ENCODE measurements at regions of chr14 and their contacts with region 1.

Region 1: DNA sequence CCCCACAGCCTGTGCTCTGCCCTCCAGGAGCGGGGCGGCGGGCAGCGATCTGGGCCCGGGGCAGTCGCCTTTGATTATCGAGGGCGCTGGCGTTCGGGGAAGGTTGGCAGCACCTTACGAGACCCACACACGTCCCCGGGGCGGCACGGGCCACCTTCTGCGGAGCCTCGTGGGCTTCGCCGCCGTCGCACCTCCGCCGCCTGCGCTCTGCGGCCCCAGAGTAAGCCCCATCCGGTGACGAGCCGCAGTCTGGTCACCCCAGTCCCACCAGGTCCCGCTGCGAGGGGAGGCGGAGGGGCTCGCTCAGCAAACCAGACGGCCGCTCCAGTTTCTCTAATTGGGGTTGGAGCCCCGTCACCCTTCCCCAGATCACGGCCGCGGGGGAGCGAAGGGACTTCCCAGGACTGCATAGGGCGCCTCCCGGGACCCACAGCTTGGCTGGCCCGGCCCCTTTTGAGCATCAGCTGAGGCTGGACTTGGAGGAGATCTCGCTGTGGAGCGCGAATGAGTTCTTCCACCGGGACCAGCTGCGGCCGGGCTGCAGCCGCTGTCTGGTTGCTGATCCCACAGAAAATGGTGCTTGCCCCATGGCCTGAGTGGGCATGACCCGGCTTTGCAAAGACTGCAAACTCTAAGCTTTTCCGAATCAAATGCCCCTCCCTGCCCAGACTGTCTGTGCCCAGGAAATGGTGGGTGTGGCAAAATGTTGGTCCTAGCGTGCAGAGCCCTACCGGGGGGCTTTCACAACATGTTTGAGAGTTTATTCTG is 560 bp downstream of the LGALS3 start:
- DNase-seq: peak; percentile 73
- H3K4me3 Mint-ChIP-seq: peak overlapping the region; percentile 90
- H3K27ac Mint-ChIP-seq: peak overlapping the region; percentile 89
- H3K4me1 Mint-ChIP-seq: peaks cover 16% of the 10 kb centered on the region
- H3K27me3 Mint-ChIP-seq: no peaks in the 10 kb centered on the region
- CTCF ChIP-seq: no peak

Region 2: GRCh38 chr14:55071870-55072640 is 57.6 kb before region 1 on chr14:
- CTCF ChIA-PET with region 1: interaction called, 8 read pairs
- POLR2A ChIA-PET with region 1: interaction called, 56 read pairs
- intact Hi-C with region 1: no loop called
- DNase-seq: peak; percentile 81
- H3K4me3 Mint-ChIP-seq: peak overlapping the region; percentile 50
- H3K27ac Mint-ChIP-seq: peak overlapping the region; percentile 100
- H3K4me1 Mint-ChIP-seq: peaks cover 47% of the 10 kb centered on the region
- H3K27me3 Mint-ChIP-seq: no peaks in the 10 kb centered on the region
- CTCF ChIP-seq: no peak

Region 3: DNA sequence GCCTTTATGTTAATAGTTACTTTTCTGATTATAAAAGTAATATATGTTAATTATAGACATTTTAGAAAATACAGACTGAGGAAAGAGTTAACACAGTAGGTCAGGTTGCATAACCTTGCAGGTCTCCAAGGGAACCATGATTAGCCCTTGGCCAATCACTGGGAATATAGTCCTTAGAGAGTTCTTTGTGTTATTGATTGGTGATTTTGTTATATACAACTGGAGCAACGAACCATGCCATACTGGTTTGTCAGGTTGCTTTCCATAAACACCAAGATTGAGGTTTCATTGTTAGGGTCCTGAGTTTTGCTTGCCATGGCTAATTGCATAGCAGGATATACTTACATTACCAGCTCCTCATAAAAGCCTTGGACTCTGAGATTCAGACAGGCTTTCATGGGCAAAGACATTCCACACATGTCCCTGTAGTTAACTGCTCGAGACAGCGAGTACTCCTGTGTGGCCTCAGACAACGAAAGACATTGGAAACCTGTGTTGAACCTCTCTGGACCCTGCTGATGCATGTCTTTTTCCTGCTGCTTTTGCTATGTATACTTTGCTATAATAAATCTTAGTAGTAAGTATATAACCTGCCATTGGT is 44.5 kb before region 1 on chr14:
- CTCF ChIA-PET with region 1: interaction called, 6 read pairs
- POLR2A ChIA-PET with region 1: interaction called, 56 read pairs
- intact Hi-C with region 1: loop called (anchors 1 kb)
- DNase-seq: no peak
- H3K4me3 Mint-ChIP-seq: no peak overlapping the region
- H3K27ac Mint-ChIP-seq: no peak overlapping the region
- H3K4me1 Mint-ChIP-seq: no peaks in the 10 kb centered on the region
- H3K27me3 Mint-ChIP-seq: no peaks in the 10 kb centered on the region
- CTCF ChIP-seq: no peak

Region 4: DNA sequence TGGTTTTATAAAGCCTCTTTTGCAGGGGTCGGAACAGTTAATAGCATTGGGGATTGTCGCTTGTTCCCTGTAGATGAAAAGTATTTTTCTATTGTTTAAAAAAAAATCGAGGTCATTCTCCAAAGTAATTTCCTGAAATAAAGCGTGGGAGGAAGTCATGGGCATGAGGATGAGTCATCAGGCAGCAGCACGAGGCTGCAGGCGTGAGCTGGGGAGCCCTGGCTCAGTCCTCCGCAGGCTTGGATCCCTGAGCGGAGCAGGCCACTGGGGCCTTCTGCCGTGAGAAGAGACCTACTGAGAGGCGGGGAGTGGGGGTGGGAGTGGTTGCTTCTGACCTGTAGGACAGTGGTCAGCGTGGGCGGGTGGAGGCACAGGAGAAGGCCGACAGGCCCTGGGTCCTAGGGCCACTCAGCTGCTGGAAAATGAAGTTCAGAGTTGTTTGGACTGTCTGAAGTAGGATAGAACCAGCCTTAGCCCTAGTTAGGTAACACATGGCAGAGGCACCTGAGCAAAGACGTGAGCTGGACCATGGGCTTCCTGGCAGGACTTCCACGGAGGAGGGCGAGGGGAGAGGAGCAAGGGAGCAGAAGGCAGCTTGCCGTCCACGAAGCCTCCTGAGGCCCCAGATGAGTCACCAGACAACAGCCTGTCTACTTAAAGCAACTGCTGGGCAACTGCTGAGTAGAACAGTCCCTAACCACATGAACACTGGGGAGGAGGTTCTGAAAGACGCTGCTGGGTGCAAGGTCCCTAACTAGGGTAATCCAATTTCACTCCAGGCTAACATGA is 21.7 kb before region 1 on chr14:
- CTCF ChIA-PET with region 1: interaction called, 13 read pairs
- POLR2A ChIA-PET with region 1: interaction called, 385 read pairs
- intact Hi-C with region 1: loop called (anchors 1 kb)
- DNase-seq: peak; percentile 95
- H3K4me3 Mint-ChIP-seq: peak overlapping the region; percentile 61
- H3K27ac Mint-ChIP-seq: peak overlapping the region; percentile 99
- H3K4me1 Mint-ChIP-seq: peaks cover 22% of the 10 kb centered on the region
- H3K27me3 Mint-ChIP-seq: no peaks in the 10 kb centered on the region
- CTCF ChIP-seq: no peak

Region 5: GRCh38 chr14:55152052-55152753 is 22.6 kb after region 1 on chr14:
- CTCF ChIA-PET with region 1: interaction called, 3 read pairs
- POLR2A ChIA-PET with region 1: interaction called, 13 read pairs
- intact Hi-C with region 1: no loop called
- DNase-seq: peak; percentile 25
- H3K4me3 Mint-ChIP-seq: no peak overlapping the region
- H3K27ac Mint-ChIP-seq: peak overlapping the region; percentile 74
- H3K4me1 Mint-ChIP-seq: no peaks in the 10 kb centered on the region
- H3K27me3 Mint-ChIP-seq: no peaks in the 10 kb centered on the region
- CTCF ChIP-seq: no peak